Lower leg skin (tissue), 4 donors: ENCODE measurements at regions of chr16 and their contacts with region 1.

Region 1: DNA sequence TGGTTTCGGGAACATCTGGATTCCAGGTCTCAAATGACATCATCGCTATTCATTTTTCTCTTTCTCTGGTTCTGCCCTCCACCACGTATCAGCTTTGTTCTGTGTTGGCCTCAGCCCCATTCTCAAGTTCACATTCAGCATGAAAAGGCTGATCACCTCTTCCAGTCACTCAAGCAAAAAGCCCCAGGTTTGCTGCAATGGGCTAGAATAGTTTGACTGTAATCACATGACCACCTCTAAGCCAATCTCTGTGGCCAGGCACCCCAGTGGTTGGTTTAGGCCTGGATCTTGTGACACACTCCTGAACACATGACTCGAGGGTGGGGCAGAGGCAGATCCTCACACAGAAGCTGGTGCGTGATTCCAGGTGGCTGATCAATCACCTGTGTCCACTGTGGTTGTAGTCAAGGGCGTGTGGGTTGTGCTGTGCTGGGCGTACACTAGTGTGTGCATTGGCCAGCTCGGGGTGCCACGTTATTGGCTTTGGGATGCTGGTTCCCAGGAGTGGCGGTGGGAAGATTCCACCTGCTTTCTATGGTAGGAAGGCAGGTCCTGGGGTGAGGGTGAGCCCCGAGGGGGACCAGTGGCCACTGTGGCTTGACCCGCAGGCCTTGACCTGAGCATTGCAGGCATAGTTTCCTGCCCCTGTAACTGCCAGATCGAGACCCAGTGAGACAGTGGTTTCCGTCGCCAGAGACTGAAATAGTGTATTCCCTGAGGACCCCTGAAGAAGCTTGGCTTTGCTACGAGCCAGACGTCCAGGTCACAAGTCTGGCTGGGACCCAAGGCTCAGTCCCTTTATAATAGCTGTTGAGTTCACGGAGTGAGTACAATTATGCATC is 12.0 kb downstream of the EEF2K start:
- DNase-seq: no peak
- H3K4me3 ChIP-seq: no peak overlapping the region
- CTCF ChIP-seq: no peak
- POLR2A ChIP-seq: no peak

Region 2: DNA sequence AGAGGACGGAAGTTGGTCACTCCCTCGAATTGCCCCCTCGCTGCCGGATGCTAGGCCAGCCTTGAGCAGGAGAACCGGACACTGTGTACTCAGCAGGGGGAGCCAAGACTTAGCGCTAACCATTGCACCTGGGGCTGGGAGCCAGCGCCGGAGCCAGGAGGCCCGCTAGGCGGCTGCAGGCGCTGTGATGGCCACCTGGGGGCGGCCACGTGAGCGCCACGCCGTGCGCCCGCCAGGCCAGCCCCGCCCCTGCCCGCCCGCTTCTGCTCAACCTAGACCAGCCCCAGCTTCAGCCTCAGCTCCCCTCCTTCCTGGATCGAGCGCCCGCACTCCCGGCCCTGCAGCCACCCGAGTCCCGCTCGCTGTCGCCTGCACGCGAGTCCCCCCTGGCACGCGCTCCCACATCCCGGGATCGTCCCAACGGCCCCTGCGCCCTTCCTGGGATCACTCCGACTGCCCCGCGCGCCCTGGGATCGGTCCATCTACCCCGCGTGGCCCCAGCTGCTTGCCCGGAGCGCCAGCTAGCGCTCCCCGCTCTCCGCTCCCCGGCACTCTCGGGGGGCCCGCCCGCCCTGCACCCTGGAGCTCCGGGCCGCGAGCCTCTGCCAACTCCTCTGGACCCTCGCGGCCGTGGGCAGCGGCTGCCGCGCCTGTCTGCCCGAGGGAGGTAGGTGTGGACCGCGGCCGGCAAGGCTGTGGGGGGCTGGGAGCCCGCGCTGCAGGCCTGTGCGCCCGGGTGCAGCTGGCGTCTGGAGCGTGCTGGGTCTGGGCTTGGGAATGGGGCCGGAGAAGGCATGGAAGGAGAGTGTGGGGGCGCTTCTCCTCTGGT is 11.9 kb before region 1 on chr16 and contains the start of gene EEF2K:
- intact Hi-C with region 1: no loop called
- DNase-seq: peak; percentile 90 to 98
- H3K4me3 ChIP-seq: peak within 1 kb of the TSS; percentile 97
- CTCF ChIP-seq: peak in 1 of 3 donors; percentile 67
- POLR2A ChIP-seq: no peak
- total RNA-seq, gene EEF2K: 47.8 to 112 (median 73.2) TPM

Region 3: GRCh38 chr16:22284637-22285036 is 66.5 kb after region 1 on chr16:
- intact Hi-C with region 1: loop called (anchors 10 kb)
- DNase-seq: no peak
- H3K4me3 ChIP-seq: no peak overlapping the region
- CTCF ChIP-seq: no peak
- POLR2A ChIP-seq: no peak